Panc1 (cell line): ENCODE measurements at regions of chr11 and their contacts with region 1.

Region 1: GRCh38 chr11:86753459-86753858 is 46.9 kb upstream of the PRSS23 start:
- DNase-seq: no peak
- ATAC-seq: no peak
- H3K4me3 ChIP-seq: no peak overlapping the region
- H3K27ac ChIP-seq: no peak overlapping the region; the same call in 1 of the 2 replicates
- H3K4me1 ChIP-seq: no peaks in the 10 kb centered on the region
- H3K27me3 ChIP-seq: no peaks in the 10 kb centered on the region
- CTCF ChIP-seq: no peak

Region 2: DNA sequence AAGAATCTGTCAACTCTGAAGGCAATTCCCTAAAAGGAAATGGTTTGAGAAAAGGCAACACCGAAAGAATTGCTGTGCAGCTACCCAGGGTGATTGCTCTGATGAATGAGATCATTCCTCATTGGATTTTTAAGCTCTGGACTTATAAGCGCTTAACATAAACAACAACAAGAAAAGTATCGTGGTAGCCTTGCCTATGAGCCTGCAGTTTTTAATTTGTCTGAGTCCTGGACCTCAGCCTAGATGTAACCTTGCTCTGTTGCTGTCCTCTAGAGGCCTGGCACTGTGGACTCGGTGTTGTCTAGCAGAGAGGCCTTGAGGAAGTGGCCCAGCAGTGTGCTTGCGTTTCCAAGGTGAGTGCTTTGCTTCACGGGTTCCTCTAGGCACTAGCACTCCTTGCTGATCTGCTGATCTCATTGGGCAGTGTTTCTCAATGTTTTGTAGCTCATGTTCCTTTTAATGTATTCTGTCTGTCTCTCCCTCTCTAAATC is 358.4 kb before region 1 on chr11:
- CTCF ChIA-PET with region 1: no interaction called
- POLR2A ChIA-PET with region 1: interaction called, 11 read pairs
- in situ Hi-C with region 1: no loop called
- intact Hi-C with region 1: no loop called
- DNase-seq: no peak
- ATAC-seq: peak; percentile 81
- H3K4me3 ChIP-seq: no peak overlapping the region
- H3K27ac ChIP-seq: no peak overlapping the region
- H3K4me1 ChIP-seq: no peaks in the 10 kb centered on the region
- H3K27me3 ChIP-seq: no peaks in the 10 kb centered on the region
- CTCF ChIP-seq: no peak